MCF 10A (cell line): ENCODE measurements at regions of chr5 and their contacts with region 1.

Region 1: DNA sequence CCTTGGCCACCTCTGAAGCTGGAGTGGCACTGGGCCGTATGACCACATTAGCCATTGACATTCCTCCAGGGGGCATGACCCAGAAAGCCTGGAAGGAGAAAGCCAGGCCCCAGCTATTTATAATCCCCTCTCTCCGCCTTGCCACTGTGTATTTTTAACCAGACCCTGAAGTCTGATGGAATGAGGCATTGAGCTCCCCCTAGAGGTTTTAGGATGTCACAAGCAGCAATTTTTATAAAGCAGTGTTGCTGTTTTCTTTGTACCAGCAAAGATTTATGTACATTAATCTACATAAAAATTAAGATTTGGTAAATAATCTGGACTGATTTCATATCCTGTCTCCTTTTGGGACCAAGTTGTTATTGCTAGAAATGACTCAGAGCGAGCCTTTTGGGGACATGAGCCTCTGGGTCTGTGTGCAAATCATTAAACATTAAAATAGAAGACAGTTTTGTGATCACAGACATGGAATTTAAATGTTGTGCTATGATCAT is 127.1 kb downstream of the TRIO start:
- DNase-seq: peak; percentile 70
- H3K4me3 Mint-ChIP-seq: no peak overlapping the region
- H3K27ac Mint-ChIP-seq: no peak overlapping the region
- H3K4me1 Mint-ChIP-seq: peaks cover 50% of the 10 kb centered on the region
- H3K27me3 Mint-ChIP-seq: no peaks in the 10 kb centered on the region
- CTCF ChIP-seq: peak; percentile 81

Region 2: GRCh38 chr5:13987843-13988464 is 282.3 kb before region 1 on chr5:
- CTCF ChIA-PET with region 1: interaction called, 64 read pairs
- POLR2A ChIA-PET with region 1: interaction called, 4 read pairs
- intact Hi-C with region 1: loop called (anchors 1 kb)
- DNase-seq: peak; percentile 75
- H3K4me3 Mint-ChIP-seq: no peak overlapping the region
- H3K27ac Mint-ChIP-seq: no peak overlapping the region
- H3K4me1 Mint-ChIP-seq: peaks cover 7% of the 10 kb centered on the region
- H3K27me3 Mint-ChIP-seq: no peaks in the 10 kb centered on the region
- CTCF ChIP-seq: peak; percentile 88

Region 3: DNA sequence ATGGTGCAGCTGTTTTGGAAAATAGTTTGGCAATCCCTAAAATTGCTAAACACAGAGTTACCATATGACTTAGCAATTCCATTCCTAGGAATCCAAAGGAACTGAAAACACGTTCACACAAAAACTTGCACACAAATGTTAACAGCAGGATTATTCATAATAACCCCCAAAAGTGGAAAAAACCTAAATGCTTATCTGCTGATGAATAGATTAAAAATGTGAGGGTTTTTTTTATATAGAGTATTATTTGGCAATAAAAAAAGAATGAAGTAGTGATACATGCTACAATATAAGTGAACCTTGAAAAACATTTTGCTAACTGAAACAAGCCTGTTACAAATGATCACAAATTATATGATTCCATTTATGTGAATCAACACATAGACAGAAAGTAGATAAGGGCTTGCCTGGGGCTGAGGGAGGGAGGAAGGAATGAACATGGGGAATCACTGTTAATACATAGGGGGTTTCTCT is 172.2 kb before region 1 on chr5:
- CTCF ChIA-PET with region 1: interaction called, 10 read pairs
- POLR2A ChIA-PET with region 1: no interaction called
- intact Hi-C with region 1: no loop called
- DNase-seq: no peak
- H3K4me3 Mint-ChIP-seq: no peak overlapping the region
- H3K27ac Mint-ChIP-seq: no peak overlapping the region
- H3K4me1 Mint-ChIP-seq: no peaks in the 10 kb centered on the region
- H3K27me3 Mint-ChIP-seq: no peaks in the 10 kb centered on the region
- CTCF ChIP-seq: no peak

Region 4: GRCh38 chr5:14142827-14143548 is 127.3 kb before region 1 on chr5 and contains the start of gene TRIO:
- CTCF ChIA-PET with region 1: interaction called, 13 read pairs
- POLR2A ChIA-PET with region 1: interaction called, 128 read pairs
- intact Hi-C with region 1: loop called (anchors 1 kb)
- DNase-seq: peak; percentile 91
- H3K4me3 Mint-ChIP-seq: peak within 1 kb of the TSS; percentile 89
- H3K27ac Mint-ChIP-seq: peak within 1 kb of the TSS; percentile 62
- H3K4me1 Mint-ChIP-seq: peaks cover 23% of the 10 kb centered on the region
- H3K27me3 Mint-ChIP-seq: peaks cover 12% of the 10 kb centered on the region
- CTCF ChIP-seq: peak; percentile 60
- total RNA-seq, gene TRIO: 134 and 136 TPM in 2 replicates

Region 5: DNA sequence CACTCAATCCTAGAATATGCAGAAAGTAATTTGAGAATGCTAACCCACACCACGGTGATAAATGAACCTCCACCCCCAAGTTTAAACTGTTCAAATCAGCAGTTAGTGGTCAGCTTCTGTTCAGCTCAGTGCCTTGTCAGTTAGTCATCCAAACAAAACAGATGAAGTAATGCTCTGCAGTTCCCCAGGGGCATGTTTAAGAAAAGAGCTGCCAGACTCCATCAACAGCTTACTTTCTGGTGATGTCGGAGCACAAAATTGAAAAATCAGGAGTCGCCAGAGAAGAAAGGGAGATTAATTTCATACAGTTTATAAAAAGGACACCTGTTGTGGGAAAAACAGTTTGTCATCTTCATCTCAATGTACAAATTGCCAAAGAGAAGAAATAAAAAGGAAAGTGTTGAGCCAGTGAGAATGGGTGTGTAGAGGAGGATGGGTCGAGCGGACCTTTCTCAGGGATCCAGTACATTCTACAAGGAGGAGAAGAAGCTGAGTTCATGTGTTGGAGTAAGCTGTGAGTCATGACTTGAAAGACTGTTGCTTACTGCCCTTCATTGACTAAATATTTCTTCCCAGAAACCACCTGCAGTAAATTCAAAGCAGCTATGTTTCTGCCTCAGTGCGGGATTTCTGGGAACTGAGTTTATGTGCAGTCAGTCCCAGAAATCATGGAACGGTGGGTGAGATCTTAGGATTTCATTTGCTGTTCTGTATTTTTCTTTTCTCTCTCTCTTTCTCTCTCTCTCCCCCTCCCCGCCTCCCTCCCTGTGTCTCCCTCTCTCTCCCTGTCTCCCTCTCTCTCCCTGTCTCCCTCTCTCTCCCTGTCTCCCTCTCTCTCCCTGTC is 113.4 kb before region 1 on chr5:
- CTCF ChIA-PET with region 1: interaction called, 20 read pairs
- POLR2A ChIA-PET with region 1: interaction called, 39 read pairs
- intact Hi-C with region 1: no loop called
- DNase-seq: peak; percentile 93
- H3K4me3 Mint-ChIP-seq: no peak overlapping the region
- H3K27ac Mint-ChIP-seq: no peak overlapping the region
- H3K4me1 Mint-ChIP-seq: peaks cover 29% of the 10 kb centered on the region
- H3K27me3 Mint-ChIP-seq: no peaks in the 10 kb centered on the region
- CTCF ChIP-seq: no peak

Region 6: DNA sequence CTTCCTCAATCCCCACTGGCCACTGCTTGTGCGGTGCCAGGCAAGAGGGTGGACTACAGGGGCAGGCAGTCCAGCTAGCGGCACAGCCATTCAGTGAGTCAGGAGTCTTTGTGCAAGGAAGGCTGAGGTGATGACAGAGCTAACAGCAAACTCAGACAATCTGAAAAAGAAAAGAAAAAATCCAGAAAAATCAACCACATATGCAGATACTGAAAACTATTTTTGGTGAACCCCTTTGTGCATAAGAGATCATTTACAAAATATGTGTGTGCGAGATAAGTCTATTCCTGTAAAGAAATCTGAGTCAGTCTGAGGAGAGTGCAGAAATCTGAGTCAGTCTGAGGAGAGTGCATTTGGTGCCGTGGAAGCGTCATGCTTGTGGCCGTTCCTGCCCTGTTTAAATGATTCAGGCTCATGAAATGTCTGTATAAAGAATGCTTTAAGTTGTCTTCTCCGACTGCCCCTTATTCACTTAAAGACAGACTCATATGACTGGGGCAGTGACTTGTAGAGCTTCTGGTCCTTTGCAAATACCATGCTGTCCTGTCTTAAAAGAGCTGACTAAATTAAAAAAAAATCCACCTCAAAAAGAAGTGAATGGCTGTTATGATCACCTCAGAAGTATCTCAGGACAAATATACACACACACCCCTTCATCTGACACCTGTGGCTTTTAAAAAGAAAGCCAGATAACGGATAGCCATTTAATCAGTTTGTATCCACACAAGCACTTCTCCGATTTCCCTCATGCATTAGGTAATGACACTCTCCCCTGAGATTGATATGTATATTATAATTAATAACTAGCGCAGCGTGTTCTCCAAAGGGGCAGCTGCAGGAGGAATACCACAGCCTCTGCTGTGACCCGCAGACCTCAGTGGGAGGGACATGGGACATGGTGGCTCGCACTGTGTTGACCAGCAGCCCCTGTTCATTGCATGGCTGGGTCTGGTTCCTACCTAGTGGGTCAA is 79.8 kb before region 1 on chr5:
- CTCF ChIA-PET with region 1: interaction called, 12 read pairs
- POLR2A ChIA-PET with region 1: interaction called, 26 read pairs
- intact Hi-C with region 1: loop called (anchors 1 kb)
- DNase-seq: peak; percentile 87
- H3K4me3 Mint-ChIP-seq: peak overlapping the region; percentile 73
- H3K27ac Mint-ChIP-seq: peak overlapping the region; percentile 98
- H3K4me1 Mint-ChIP-seq: peaks cover 56% of the 10 kb centered on the region
- H3K27me3 Mint-ChIP-seq: no peaks in the 10 kb centered on the region
- CTCF ChIP-seq: no peak

Region 7: GRCh38 chr5:14240359-14240758 is 29.9 kb before region 1 on chr5:
- CTCF ChIA-PET with region 1: no interaction called
- POLR2A ChIA-PET with region 1: no interaction called
- intact Hi-C with region 1: no loop called
- DNase-seq: no peak
- H3K4me3 Mint-ChIP-seq: no peak overlapping the region
- H3K27ac Mint-ChIP-seq: no peak overlapping the region
- H3K4me1 Mint-ChIP-seq: peaks cover 21% of the 10 kb centered on the region
- H3K27me3 Mint-ChIP-seq: no peaks in the 10 kb centered on the region
- CTCF ChIP-seq: no peak

Region 8: GRCh38 chr5:14280294-14280854 is 10.1 kb after region 1 on chr5:
- CTCF ChIA-PET with region 1: interaction called, 11 read pairs
- POLR2A ChIA-PET with region 1: no interaction called
- intact Hi-C with region 1: no loop called
- DNase-seq: no peak
- H3K4me3 Mint-ChIP-seq: no peak overlapping the region
- H3K27ac Mint-ChIP-seq: no peak overlapping the region
- H3K4me1 Mint-ChIP-seq: peaks cover 14% of the 10 kb centered on the region
- H3K27me3 Mint-ChIP-seq: no peaks in the 10 kb centered on the region
- CTCF ChIP-seq: no peak

Region 9: GRCh38 chr5:14428302-14429081 is 158.2 kb after region 1 on chr5:
- CTCF ChIA-PET with region 1: no interaction called
- POLR2A ChIA-PET with region 1: no interaction called
- intact Hi-C with region 1: no loop called
- DNase-seq: no peak
- H3K4me3 Mint-ChIP-seq: no peak overlapping the region
- H3K27ac Mint-ChIP-seq: no peak overlapping the region
- H3K4me1 Mint-ChIP-seq: no peaks in the 10 kb centered on the region
- H3K27me3 Mint-ChIP-seq: no peaks in the 10 kb centered on the region
- CTCF ChIP-seq: no peak